Keratinocyte (primary cell): ENCODE measurements at regions of chr2 and their contacts with region 1.

Region 1: DNA sequence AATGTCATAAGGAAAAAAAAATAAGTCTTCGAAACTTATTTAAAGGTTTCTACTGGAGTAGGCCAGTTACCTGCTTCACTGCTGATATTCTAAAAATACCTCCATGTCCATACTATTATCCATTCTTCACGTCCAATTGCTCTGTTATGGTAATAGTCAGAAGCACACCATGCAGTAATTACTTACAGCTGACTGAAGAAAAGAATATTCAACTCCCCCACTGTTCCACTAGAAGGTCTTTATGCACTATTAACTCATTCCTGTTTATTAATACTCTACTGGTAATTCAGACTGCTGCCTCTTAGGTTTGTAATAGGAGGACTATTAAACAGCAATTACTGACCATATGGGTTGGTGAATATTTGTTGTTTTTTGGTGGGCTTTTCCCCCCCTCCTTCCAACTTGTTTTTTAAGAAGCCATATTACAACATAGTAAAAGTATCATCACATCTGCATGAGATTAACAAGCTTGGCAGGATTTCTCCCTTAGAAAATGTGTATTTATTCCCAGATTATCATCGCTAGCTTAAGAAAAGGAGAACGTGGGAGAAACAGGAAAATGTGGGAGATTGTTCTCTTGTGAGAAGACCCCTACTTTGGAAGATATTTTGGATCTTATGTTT is 806.4 kb upstream of the FANCL start:
- DNase-seq: no peak
- H3K4me3 ChIP-seq: no peak overlapping the region
- H3K27ac ChIP-seq: no peak overlapping the region
- H3K4me1 ChIP-seq: no peaks in the 10 kb centered on the region
- H3K27me3 ChIP-seq: no peaks in the 10 kb centered on the region
- CTCF ChIP-seq: no peak

Region 2: GRCh38 chr2:58973831-58974281 is 73.6 kb before region 1 on chr2:
- dilution Hi-C with region 1: no loop called
- DNase-seq: no peak
- H3K4me3 ChIP-seq: no peak overlapping the region
- H3K27ac ChIP-seq: no peak overlapping the region
- H3K4me1 ChIP-seq: no peaks in the 10 kb centered on the region
- H3K27me3 ChIP-seq: no peaks in the 10 kb centered on the region
- CTCF ChIP-seq: no peak

Region 3: GRCh38 chr2:58984731-58985130 is 62.8 kb before region 1 on chr2:
- dilution Hi-C with region 1: no loop called
- DNase-seq: no peak
- H3K4me3 ChIP-seq: no peak overlapping the region
- H3K27ac ChIP-seq: no peak overlapping the region
- H3K4me1 ChIP-seq: no peaks in the 10 kb centered on the region
- H3K27me3 ChIP-seq: no peaks in the 10 kb centered on the region
- CTCF ChIP-seq: no peak

Region 4: DNA sequence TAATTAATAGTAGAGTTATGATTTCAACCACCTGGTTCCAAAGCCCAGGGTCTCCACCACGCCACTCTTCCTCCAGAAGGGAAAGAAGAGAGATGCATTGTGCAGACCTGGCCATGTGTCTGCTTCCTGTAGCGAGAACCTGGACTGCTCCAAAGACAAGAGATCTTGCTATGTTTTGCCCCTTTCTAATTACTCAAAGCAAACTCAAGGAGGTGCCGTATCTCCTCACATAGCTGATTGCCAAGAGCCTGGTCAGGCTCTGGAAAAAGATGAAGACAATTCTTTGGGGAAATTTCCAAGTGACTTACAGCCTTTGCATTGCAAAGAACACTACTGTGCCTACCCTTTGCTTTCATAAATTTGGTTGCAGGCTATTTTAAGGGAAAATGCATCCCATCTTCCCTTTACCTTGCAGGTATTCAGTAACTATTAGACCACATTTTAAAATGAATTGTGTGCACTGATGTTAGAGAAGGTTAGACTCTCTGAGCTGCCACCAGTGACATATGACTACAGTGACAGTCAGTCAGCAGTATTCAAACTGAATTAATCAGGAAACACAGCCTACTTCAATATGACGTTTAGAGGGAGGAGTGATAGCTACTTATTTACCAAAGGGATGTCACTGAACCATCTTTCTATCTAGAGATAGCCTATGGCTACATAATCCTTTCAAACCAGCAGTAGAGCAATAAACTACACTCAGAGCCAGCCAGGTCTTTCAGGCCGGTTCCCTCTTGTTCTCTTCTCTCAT is 35.8 kb after region 1 on chr2:
- dilution Hi-C with region 1: loop called (anchors 5 kb)
- DNase-seq: no peak
- H3K4me3 ChIP-seq: no peak overlapping the region
- H3K27ac ChIP-seq: no peak overlapping the region
- H3K4me1 ChIP-seq: no peaks in the 10 kb centered on the region
- H3K27me3 ChIP-seq: no peaks in the 10 kb centered on the region
- CTCF ChIP-seq: no peak